ENCODE measurements at regions of chr1 and their contacts with region 1.

Region 1: DNA sequence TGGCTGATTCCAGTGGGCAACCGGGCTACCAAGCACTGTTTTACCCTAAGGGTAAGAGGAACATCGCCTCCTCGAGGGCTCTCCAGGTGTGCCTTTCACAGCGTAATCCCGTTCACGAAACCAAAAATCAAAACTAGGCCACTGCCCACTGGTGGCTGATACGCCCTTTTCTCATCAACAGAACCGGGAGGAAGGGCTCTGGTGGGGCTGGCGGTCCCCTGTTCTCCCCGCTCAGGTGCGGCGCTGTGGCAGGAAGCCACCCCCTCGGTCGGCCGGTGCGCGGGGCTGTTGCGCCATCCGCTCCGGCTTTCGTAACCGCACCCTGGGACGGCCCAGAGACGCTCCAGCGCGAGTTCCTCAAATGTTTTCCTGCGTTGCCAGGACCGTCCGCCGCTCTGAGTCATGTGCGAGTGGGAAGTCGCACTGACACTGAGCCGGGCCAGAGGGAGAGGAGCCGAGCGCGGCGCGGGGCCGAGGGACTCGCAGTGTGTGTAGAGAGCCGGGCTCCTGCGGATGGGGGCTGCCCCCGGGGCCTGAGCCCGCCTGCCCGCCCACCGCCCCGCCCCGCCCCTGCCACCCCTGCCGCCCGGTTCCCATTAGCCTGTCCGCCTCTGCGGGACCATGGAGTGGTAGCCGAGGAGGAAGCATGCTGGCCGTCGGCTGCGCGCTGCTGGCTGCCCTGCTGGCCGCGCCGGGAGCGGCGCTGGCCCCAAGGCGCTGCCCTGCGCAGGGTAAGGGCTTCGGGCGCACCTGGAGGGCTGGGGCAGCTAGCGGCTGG is at the start of gene IL6R:
- DNase-seq: peak; percentile 62
- H3K4me3 Mint-ChIP-seq: peak within 1 kb of the TSS; percentile 86
- H3K27ac Mint-ChIP-seq: peak within 1 kb of the TSS; percentile 77
- H3K4me1 Mint-ChIP-seq: peaks cover 73% of the 10 kb centered on the region
- H3K27me3 Mint-ChIP-seq: no peaks in the 10 kb centered on the region
- total RNA-seq, gene IL6R: 4.9 and 5.0 TPM in 2 replicates

Region 2: GRCh38 chr1:154324669-154325582 is 80.2 kb before region 1 on chr1 and contains the start of gene ATP8B2:
- intact Hi-C with region 1: loop called (anchors 5 kb)
- DNase-seq: peak; percentile 74
- H3K4me3 Mint-ChIP-seq: peak within 1 kb of the TSS; percentile 96
- H3K27ac Mint-ChIP-seq: peak within 1 kb of the TSS; percentile 89
- H3K4me1 Mint-ChIP-seq: peaks cover 35% of the 10 kb centered on the region
- H3K27me3 Mint-ChIP-seq: peaks cover 22% of the 10 kb centered on the region
- total RNA-seq, gene ATP8B2: 50.1 and 54.9 TPM in 2 replicates

Region 3: DNA sequence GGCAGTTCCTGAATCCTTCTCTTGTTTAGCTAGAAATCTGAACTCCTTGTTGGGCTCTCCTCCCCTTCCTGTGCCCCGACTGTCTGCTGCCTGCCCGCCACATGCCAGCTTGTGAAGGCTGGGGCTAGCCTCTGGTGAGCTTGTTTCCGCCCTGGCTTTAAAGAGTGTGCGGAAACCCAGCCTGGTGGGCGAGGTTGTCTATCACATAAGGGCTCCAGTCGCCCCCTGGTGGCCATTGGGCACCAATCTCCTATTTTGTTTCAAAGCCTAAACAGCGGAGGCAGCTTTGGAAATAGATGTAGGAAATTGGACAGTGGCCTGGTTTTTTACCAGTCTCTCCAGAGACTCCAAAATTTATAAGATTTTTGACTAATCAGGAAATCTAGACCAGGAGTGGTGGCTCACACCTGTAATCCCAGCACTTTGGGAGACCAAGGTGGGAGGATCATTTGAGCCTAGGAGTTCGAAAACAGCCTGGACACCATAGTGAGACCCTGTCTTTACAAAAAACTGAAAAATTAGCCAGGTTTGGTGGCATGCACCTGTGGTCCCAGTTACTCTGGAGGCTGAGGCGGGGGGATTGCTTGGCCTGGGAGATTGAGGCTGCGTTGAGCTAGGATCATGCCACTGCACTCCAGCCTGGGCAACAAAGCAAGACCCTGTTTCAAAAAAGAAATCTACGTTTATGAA is 70.0 kb before region 1 on chr1:
- intact Hi-C with region 1: no loop called
- DNase-seq: peak; percentile 78
- H3K4me3 Mint-ChIP-seq: no peak overlapping the region
- H3K27ac Mint-ChIP-seq: peak overlapping the region; percentile 75
- H3K4me1 Mint-ChIP-seq: peaks cover 65% of the 10 kb centered on the region
- H3K27me3 Mint-ChIP-seq: no peaks in the 10 kb centered on the region

Region 4: DNA sequence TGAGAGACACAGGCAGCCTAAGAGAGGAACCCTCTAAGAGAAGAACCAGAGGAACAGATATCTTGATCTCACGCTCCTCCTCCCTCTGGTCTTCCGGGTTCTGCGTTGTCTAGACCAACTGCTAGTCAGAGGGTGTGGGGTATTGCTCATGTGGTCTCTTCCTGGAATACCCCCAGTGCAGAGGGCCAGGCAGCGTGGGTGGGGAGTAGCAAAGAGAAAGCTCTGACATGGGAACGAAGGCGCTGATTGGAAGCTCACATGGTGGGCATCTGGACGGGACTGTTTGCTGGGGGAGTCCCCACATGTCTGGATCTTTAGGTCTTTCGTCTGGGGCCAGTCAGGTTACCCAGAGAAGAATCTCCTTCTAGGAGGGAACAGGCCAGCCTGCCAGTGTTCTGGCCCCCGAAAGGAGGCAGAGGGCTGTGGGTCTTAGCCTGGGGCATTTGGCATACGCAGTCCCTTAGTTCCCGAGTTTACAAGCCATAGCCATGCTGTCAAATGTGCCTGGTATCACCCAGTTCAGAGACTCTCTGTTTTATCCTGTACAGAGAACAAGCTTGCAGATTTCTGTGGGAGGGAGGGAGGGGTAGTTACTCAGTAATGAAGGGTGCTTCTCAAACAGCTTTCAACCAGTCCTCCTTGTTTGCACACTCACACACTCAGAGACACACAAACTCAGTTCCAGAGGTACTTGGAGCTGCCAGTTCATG is 18.4 kb before region 1 on chr1:
- intact Hi-C with region 1: loop called (anchors 1 kb)
- DNase-seq: peak; percentile 29
- H3K4me3 Mint-ChIP-seq: peak overlapping the region; percentile 64
- H3K27ac Mint-ChIP-seq: peak overlapping the region; percentile 92
- H3K4me1 Mint-ChIP-seq: peaks cover 20% of the 10 kb centered on the region
- H3K27me3 Mint-ChIP-seq: no peaks in the 10 kb centered on the region

Region 5: DNA sequence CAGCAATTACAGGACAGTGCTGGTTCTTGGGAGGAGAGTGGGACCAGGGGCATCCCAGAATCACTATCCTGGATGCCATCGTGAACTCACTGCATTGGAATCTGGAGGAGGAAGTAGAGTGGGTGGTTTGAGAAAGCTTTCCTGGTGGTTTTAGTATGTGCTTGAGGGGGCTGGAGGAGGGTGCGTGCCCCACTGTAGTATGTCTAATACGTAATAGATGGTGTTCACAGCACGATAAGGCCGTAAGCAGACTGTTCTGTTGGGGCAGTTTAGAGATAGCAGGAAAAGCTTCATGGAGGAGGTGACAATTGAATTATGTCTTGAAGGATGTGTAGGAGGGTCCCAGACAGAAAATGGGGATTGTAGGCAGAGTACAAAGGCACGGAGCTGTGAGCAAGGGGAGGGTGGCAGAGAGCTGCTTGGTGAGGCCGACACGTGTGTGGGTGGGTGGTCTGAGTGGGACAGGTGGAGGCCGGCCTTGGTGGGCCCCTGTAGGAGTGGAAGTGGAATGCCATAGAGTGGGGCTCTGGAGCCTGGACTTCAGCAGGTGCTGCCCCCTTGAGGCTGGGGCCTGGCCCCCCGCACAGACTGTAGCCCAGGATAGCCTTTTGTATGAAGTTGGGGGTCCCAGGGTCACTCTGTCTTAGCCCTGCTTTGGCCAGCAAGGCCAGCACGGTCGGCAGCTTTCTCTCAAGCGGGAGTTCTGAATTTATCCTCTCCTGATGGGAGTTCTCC is 37.0 kb after region 1 on chr1:
- intact Hi-C with region 1: loop called (anchors 1 kb)
- DNase-seq: no peak
- H3K4me3 Mint-ChIP-seq: no peak overlapping the region
- H3K27ac Mint-ChIP-seq: no peak overlapping the region
- H3K4me1 Mint-ChIP-seq: peaks cover 66% of the 10 kb centered on the region
- H3K27me3 Mint-ChIP-seq: peaks cover 9% of the 10 kb centered on the region

Region 6: GRCh38 chr1:154479764-154480421 is 74.7 kb after region 1 on chr1:
- intact Hi-C with region 1: loop called (anchors 1 kb)
- DNase-seq: peak; percentile 59
- H3K4me3 Mint-ChIP-seq: no peak overlapping the region
- H3K27ac Mint-ChIP-seq: no peak overlapping the region
- H3K4me1 Mint-ChIP-seq: peaks cover 14% of the 10 kb centered on the region
- H3K27me3 Mint-ChIP-seq: peaks cover 7% of the 10 kb centered on the region

Region 7: GRCh38 chr1:154607609-154608396 is 202.6 kb after region 1 on chr1 and contains the start of gene ADAR:
- intact Hi-C with region 1: no loop called
- DNase-seq: peak; percentile 93
- H3K4me3 Mint-ChIP-seq: peak within 1 kb of the TSS; percentile 94
- H3K27ac Mint-ChIP-seq: peak within 1 kb of the TSS; percentile 98
- H3K4me1 Mint-ChIP-seq: peaks cover 68% of the 10 kb centered on the region
- H3K27me3 Mint-ChIP-seq: no peaks in the 10 kb centered on the region
- total RNA-seq, gene ADAR: 299 and 301 TPM in 2 replicates